Psoas muscle (tissue), 8 donors: ENCODE measurements at regions of chr3 and their contacts with region 1.

Region 1: DNA sequence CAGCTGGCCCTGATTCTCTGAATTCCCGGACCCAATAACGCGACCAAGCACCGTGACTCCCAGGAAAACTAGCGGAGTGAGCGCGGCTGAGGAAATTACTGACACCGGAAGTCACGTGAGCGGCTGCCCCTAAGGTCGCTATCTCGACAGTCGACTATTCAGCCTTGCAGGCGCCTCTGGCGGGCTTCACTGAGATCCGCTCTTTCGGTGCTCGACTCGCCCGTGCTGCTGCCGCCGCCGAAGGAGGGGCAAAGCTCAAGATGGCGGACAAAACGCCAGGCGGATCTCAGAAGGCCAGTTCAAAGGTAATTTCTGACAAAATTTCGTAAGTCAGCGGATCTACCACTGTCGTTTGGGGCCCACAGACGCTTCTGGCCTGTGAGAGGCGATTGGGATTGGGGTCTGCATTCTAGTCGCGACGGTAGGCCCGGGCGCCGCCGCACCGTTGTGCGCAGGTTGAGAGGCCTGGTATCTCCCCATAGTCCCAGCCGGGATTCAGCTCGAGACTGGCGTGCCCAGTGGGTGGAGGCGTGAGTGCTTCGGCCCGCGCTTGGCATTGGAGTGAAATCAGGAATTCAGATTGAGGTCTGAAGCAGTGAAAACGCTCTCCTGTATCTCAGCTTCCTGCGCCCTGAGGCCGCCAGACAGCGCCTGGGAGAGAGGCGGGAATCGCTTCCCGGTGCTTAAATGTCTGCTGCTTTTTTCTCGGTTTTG is at the start of gene U2SURP:
- DNase-seq: peak; percentile 96 to 98
- ATAC-seq: peak; percentile 95 to 97 (median 96)
- H3K4me3 ChIP-seq: peak within 1 kb of the TSS; percentile 94
- H3K27ac ChIP-seq: peak within 1 kb of the TSS; percentile 86
- H3K4me1 ChIP-seq: peaks cover 48% of the 10 kb centered on the region
- H3K27me3 ChIP-seq: no peaks in the 10 kb centered on the region
- CTCF ChIP-seq: no peak
- total RNA-seq, gene U2SURP: 39.8 to 69.3 (median 53.3) TPM

Region 2: GRCh38 chr3:142578327-142579223 is 423.0 kb before region 1 on chr3 and contains the start of gene ATR:
- intact Hi-C with region 1: loop called (anchors 5 kb)
- DNase-seq: peak; percentile 98 to 99
- ATAC-seq: peak; percentile 99 to 100 (median 100)
- H3K4me3 ChIP-seq: peak within 1 kb of the TSS; percentile 79
- H3K27ac ChIP-seq: peak within 1 kb of the TSS; percentile 83
- H3K4me1 ChIP-seq: peaks cover 23% of the 10 kb centered on the region
- H3K27me3 ChIP-seq: no peaks in the 10 kb centered on the region
- CTCF ChIP-seq: no peak
- total RNA-seq, gene ATR: 7.5 to 11.1 (median 9.0) TPM

Region 3: GRCh38 chr3:142828703-142829305 is 172.7 kb before region 1 on chr3:
- intact Hi-C with region 1: loop called in 1 of 2 experiments (anchors 5 kb)
- DNase-seq: peak; percentile 81 to 82
- ATAC-seq: peak; percentile 86 to 97 (median 92)
- H3K4me3 ChIP-seq: no peak overlapping the region
- H3K27ac ChIP-seq: no peak overlapping the region
- H3K4me1 ChIP-seq: no peaks in the 10 kb centered on the region
- H3K27me3 ChIP-seq: no peaks in the 10 kb centered on the region
- CTCF ChIP-seq: peak; percentile 77